Activated CD4-positive, alpha-beta memory T cell treated with anti-CD3 and anti-CD28 coated beads, Interleukin-2, amount 10 ng/mL, durations not matched to agents 7 days and 5 days (primary cell): ENCODE measurements at regions of chr4 and their contacts with region 1.

Region 1: GRCh38 chr4:102430461-102430910 is 70.7 kb upstream of the NFKB1 start:
- DNase-seq: no peak
- H3K4me3 Mint-ChIP-seq: peak overlapping the region; percentile 79
- H3K27ac Mint-ChIP-seq: peak overlapping the region; percentile 83
- H3K4me1 Mint-ChIP-seq: peaks cover 19% of the 10 kb centered on the region
- H3K27me3 Mint-ChIP-seq: peaks cover 14% of the 10 kb centered on the region

Region 2: DNA sequence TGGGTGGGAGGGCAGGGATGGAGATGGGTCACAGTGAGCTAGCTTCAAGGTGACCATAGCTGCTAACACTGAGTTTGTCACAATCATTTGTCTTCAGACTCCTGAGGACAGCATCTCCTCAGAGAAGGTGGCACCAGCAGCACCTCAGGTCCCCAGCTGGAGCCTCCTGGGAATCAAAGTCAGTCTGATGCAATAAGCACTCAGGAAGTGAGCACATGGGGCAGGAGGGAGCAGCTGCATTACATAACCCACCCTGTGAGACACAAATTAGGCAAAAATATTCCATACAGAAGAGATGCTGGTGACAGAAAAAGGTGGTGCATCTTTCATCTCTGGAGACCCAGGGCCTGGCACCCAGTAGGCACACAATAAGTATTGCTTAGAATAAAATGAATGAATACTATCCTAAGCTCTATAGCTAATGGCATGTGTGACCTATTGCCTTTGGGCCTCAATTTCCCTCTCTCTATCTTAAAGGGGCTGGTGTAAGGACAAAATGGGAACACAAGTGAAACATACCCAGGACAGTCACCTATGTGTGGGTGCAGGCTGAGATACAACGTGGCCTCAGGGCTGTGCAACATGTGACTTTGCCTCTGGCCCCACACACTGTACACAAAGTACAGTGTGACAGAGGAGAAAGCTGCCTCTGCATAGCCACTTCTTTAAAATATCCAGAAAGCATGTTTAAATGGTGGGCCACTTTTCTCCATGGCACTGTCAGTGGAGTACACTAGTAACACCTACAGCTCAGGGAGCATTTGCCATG is 122.3 kb before region 1 on chr4:
- CTCF ChIA-PET with region 1: interaction called, 10 read pairs
- POLR2A ChIA-PET with region 1: no interaction called
- DNase-seq: no peak
- H3K4me3 Mint-ChIP-seq: no peak overlapping the region
- H3K27ac Mint-ChIP-seq: no peak overlapping the region
- H3K4me1 Mint-ChIP-seq: peaks cover 12% of the 10 kb centered on the region
- H3K27me3 Mint-ChIP-seq: no peaks in the 10 kb centered on the region

Region 3: DNA sequence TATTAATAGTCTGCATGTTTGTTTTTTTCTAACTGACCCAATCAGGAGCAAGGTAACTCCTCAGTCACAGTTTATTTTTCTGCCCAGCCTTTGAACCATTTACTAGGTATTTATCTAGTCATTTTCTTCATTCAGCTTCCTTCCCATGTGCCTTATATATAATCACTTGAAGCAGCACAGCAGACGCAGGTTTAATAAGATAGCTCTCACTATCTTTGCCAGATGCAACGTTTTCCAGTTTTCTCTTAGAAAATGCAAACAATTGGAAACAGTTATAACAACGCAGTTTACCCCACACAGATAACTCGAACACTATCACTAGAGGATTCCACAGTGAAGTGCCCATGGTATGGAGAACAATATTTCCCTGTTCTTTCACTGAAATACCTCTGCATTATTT is 14.3 kb after region 1 on chr4:
- CTCF ChIA-PET with region 1: interaction called, 19 read pairs
- POLR2A ChIA-PET with region 1: interaction called, 5 read pairs
- DNase-seq: no peak
- H3K4me3 Mint-ChIP-seq: no peak overlapping the region
- H3K27ac Mint-ChIP-seq: no peak overlapping the region
- H3K4me1 Mint-ChIP-seq: peaks cover 26% of the 10 kb centered on the region
- H3K27me3 Mint-ChIP-seq: peaks cover 2% of the 10 kb centered on the region

Region 4: GRCh38 chr4:102500696-102501446 is 70.4 kb after region 1 on chr4 and contains the start of gene NFKB1:
- CTCF ChIA-PET with region 1: interaction called, 15 read pairs
- POLR2A ChIA-PET with region 1: interaction called, 3 read pairs
- DNase-seq: peak; percentile 78
- H3K4me3 Mint-ChIP-seq: peak within 1 kb of the TSS; percentile 89
- H3K27ac Mint-ChIP-seq: peak within 1 kb of the TSS; percentile 87
- H3K4me1 Mint-ChIP-seq: peaks cover 26% of the 10 kb centered on the region
- H3K27me3 Mint-ChIP-seq: peaks cover 3% of the 10 kb centered on the region
- total RNA-seq, gene NFKB1: 84.7 to 88.1 TPM

Region 5: DNA sequence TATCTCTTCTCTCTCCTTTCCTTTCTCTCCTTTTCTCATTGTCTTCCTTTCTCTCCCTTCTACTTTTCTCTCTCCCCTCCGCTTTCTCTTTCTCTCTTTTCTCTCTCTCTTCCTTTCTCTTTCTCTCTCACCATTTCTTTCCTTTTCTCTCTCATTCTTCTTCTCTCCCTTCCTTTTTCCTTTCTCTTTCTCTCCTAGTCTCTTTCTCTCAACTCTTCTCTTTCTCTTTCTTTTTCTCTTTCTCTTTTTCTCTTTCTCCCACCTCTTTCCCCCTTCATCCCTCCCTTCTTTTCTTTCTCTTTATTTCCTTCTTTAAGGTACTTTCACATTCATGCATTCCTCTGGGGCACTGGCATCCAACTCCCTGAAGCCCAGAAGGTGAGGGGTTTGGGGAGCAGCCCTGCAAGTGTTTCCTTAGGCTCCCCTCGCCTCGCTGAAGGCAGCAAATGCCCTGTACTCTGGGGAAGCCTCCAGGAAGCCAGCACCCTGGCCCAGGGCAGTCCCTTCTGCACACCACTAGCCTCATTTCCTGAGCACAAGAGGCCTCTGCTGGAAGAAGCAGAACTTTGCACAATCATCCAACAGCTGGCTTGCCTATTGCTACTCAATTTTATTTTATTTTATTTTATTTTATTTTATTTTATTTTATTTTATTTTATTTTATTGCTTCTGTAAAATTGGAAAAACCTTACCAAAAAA is 194.9 kb after region 1 on chr4:
- CTCF ChIA-PET with region 1: interaction called, 51 read pairs
- POLR2A ChIA-PET with region 1: interaction called, 3 read pairs
- DNase-seq: peak; percentile 81
- H3K4me3 Mint-ChIP-seq: peak overlapping the region; percentile 57
- H3K27ac Mint-ChIP-seq: peak overlapping the region; percentile 56
- H3K4me1 Mint-ChIP-seq: peaks cover 49% of the 10 kb centered on the region
- H3K27me3 Mint-ChIP-seq: no peaks in the 10 kb centered on the region

Region 6: DNA sequence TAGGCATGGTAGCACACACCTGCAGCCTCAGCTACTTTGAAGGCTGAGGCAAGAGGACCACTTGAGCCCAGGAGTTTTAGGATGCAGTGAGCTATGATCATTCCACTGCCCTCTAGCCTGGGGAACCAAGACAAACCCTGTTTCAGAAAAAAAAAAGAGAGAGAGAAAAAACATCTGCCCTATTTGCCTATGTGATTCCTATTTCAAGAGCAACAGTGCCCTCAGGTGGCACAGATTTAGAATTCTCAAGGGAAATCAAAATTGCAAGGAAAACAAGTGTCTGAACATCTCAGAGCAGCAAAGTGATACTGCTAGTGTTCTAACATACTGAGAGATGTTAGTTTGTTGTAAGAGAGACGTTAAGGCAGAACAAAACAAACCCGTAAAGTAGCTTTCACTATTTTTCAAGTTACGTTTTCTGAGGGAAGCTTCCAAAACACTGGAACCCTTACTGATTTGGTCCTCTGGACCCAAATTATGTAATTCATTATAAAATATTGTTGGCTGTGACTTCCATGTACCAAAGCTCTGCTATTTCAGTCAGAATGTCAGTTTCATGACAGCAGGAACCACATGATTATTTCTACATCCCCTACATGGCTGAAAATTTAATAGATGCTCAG is 661.2 kb after region 1 on chr4:
- CTCF ChIA-PET with region 1: interaction called, 18 read pairs
- POLR2A ChIA-PET with region 1: interaction called, 3 read pairs
- DNase-seq: peak; percentile 56
- H3K4me3 Mint-ChIP-seq: peak overlapping the region; percentile 65
- H3K27ac Mint-ChIP-seq: peak overlapping the region; percentile 75
- H3K4me1 Mint-ChIP-seq: peaks cover 31% of the 10 kb centered on the region
- H3K27me3 Mint-ChIP-seq: no peaks in the 10 kb centered on the region